BJ (cell line): ENCODE measurements at regions of chr2 and their contacts with region 1.

Region 1: DNA sequence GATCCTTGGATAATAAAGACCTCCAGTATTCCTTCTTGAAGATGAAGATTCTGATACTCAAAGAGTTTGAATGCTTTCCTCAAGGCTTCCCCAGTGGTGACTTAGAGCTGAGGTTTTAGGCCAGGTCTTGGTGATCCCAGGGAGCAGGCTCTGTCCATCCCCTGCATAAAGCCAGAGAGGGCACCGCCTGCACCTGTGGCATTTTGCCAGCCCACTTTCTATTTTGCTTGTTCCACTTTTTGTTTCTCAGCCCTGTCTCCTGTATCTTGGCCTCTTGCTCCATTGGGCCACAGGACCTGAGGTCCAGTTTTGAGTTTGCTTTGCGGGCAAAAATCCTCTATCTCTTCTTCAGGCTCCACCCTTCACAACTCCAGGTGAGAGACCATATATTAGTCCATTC is 6.7 kb upstream of the SCYGR1 start:
- DNase-seq: no peak
- H3K4me3 ChIP-seq: no peak overlapping the region
- H3K27me3 ChIP-seq: no peaks in the 10 kb centered on the region
- CTCF ChIP-seq: no peak

Region 2: GRCh38 chr2:227256605-227257004 is 137.8 kb before region 1 on chr2:
- CTCF ChIA-PET with region 1: no interaction called
- POLR2A ChIA-PET with region 1: no interaction called
- DNase-seq: no peak
- H3K4me3 ChIP-seq: no peak overlapping the region
- H3K27me3 ChIP-seq: no peaks in the 10 kb centered on the region
- CTCF ChIP-seq: no peak

Region 3: DNA sequence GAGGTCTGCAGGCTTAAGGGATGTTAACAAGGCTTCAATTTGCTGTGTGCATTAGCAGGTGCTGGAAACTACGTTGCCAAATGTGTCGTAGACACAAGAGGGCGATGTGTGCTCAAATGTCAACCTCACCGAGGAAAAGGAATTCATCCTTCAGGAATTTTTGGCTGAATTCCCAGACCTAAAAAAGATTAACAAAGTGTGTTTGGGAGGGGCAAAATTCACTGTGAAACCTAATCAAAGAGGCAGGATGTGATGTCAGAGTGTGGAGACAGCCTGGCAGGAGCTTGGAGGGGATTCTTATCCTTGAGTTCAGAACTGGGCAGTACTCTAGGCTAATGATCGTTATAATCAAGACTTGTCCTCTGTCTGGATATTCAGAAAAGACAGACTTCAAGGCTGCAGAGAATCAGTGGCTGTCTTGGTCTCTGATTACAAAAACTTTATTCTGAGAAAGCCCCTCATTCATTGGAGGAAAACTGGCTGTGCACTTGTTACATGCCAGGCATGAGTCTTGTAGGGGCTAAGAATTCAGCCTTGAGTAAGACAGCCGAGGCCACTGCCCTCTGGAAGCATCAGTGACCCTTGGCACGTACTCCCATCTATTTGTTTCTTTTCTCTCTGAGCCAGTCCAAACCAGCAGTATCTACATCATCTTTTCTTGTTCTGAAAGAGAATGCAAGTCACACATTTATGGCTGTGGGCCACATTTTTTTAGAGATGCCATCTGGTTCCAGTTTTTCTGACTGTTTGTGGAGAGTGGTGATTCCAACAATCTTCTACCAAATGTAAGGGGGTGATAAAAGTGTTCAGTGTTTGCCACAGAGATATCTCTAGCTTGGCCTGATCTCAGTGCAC is 12.0 kb after region 1 on chr2:
- CTCF ChIA-PET with region 1: interaction called, 10 read pairs
- POLR2A ChIA-PET with region 1: no interaction called
- DNase-seq: peak; percentile 86
- H3K4me3 ChIP-seq: no peak overlapping the region
- H3K27me3 ChIP-seq: no peaks in the 10 kb centered on the region
- CTCF ChIP-seq: peak; percentile 79